ENCODE measurements at regions of chr6 and their contacts with region 1.

Region 1: DNA sequence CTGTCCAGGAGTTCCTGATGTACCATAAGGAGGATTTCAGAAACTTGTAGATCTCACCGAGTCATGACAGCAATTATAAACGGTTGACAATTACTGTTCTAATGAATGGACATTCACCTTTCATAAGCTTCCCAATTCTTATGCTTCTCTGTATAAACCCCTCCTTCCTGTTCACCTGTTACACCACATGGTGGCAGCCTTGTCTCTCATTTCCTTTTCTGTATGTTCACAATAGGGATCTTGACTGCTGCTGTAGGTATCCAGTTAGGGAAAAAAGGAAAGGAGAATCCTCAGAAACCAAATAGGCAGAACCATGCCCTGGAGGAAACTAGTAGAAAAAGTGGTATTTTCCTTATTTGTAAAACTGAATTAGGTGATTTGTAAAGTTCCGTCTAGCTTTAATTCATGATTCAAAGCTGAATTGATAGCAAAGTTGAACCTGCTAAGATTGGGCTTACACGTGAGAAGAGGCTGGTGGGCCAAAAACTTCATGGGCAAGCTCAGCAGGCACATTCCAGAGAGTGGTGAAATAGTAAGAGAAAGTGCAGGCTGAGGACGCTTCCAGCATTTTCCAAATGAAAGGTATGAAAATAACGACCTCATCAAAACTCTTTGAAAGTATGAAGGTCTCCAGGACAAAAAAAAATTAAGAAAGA is 29.0 kb upstream of the TBPL1 start:
- H3K4me3 ChIP-seq: no peak overlapping the region
- H3K27ac ChIP-seq: no peak overlapping the region
- H3K4me1 ChIP-seq: no peaks in the 10 kb centered on the region
- CTCF ChIP-seq: peak; percentile 86

Region 2: DNA sequence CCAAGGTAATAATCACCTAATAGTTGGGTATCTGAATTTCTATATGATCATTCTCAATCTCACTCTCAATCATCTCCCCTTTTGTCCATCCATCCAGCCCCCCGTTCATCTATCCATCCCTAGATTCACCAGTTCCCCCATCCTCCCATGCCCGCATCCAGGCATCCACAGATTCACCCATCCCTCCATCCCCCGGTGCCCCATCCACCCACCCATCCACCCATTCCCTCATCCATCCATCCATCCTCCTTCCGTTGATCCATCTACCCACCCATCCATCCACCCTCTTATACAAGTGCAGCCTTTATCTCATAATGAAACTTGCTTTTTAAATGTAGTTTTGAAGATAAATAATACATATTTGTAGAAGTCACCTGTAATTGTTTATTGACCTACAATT is 606.4 kb before region 1 on chr6:
- CTCF ChIA-PET with region 1: no interaction called
- POLR2A ChIA-PET with region 1: no interaction called
- H3K4me3 ChIP-seq: no peak overlapping the region
- H3K27ac ChIP-seq: no peak overlapping the region
- H3K4me1 ChIP-seq: peaks cover 9% of the 10 kb centered on the region; the same call in 1 of the 2 replicates
- CTCF ChIP-seq: no peak

Region 3: DNA sequence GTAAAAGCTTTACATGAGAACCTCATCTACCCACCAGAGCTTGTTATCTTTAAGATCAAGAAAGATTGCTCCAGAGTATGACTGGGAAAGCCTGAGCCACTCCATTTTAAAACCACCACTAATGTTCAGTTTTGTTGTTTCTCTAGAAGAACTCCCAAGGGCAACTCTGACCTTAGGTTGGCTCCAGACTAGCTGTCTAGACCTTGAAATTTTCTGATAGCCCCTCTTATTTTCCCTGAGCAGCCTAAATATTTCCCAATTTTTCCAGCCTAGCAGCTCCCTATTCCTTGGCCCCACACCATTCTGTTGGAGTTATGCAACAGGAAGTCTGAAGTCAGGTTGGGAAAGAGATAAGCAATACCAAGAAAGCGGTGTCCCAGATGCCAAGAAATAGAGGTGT is 119.8 kb before region 1 on chr6:
- CTCF ChIA-PET with region 1: no interaction called
- POLR2A ChIA-PET with region 1: no interaction called
- H3K4me3 ChIP-seq: no peak overlapping the region
- H3K27ac ChIP-seq: no peak overlapping the region
- H3K4me1 ChIP-seq: no peaks in the 10 kb centered on the region
- CTCF ChIP-seq: no peak

Region 4: GRCh38 chr6:133880896-133881295 is 43.2 kb before region 1 on chr6:
- CTCF ChIA-PET with region 1: interaction called, 11 read pairs
- POLR2A ChIA-PET with region 1: no interaction called
- H3K4me3 ChIP-seq: no peak overlapping the region
- H3K27ac ChIP-seq: no peak overlapping the region
- H3K4me1 ChIP-seq: peaks cover under 1% of the 10 kb centered on the region; the same call in 1 of the 2 replicates
- CTCF ChIP-seq: no peak

Region 5: DNA sequence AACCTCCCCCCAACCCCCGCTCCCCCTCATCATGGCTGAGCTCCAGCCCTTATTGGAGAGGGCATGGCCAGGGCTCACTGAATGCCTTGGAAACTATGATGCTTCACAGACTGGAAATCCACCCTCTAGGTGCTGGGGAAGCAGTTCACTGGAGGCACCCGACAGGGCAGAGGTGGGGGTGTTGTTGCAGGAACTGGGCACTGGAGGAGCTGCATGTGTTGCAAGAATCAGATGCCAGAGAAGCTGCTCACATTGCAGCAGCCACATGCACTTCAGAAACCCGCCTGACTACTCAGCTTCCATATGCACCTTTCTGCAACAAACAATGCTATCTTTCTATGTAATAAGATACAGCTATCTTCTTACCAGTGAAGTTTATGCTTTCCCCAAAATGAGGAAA is 21.1 kb after region 1 on chr6:
- CTCF ChIA-PET with region 1: interaction called, 55 read pairs
- POLR2A ChIA-PET with region 1: no interaction called
- H3K4me3 ChIP-seq: no peak overlapping the region
- H3K27ac ChIP-seq: no peak overlapping the region
- H3K4me1 ChIP-seq: no peaks in the 10 kb centered on the region
- CTCF ChIP-seq: 0 out of 2 replicates have a peak, but pooled peaks have one; percentile 31

Region 6: GRCh38 chr6:133973109-133973971 is 49.3 kb after region 1 on chr6:
- CTCF ChIA-PET with region 1: interaction called, 67 read pairs
- POLR2A ChIA-PET with region 1: no interaction called
- H3K4me3 ChIP-seq: no peak overlapping the region
- H3K27ac ChIP-seq: 0 out of 2 replicates have a peak overlapping the region, but pooled peaks have one; percentile 13
- H3K4me1 ChIP-seq: peaks cover 21% of the 10 kb centered on the region
- CTCF ChIP-seq: peak; percentile 47; the same call in 1 of the 2 replicates

Region 7: DNA sequence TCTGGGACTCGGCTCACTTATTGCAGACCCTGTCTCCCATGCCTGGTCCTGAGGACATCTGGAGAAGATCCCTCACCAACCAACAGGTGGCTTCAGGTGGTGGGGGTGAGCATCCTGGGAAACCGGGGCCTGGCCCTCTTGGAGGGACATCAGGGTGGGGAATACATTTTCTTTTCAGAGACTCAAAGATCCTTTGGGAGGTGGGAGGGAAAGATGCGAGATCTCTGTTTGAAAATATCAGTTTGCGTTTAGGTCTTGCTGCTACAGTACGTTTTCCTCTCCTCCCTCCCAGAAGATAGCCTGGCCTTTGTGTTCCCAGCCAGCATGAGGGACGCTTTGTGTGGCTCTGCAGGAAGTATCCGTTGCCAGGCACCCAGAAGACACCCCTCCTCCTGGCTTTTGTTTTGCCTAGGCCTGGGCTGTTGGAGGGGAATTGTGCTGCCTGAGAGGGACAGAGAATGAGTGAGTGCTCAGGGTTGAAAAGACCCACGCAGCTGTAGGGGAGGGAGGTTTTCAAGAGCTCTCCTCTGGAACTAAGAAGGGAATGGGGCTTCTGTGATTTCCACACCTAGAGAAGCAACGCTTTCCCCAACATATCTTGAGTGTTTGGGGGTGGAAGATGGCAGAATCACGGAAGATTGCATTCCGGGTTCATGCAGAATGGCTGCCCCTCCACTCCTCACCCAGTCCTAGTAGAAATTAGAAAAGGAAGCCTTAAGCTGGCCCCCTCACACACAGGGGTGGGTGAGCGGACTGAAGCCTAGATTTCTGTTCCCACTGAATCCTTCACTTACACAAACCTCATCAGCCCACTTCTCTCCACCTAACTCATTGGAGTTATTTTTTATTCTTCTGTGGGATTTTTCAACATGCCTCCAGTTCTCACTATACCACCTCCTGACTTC is 150.3 kb after region 1 on chr6:
- CTCF ChIA-PET with region 1: interaction called, 20 read pairs
- POLR2A ChIA-PET with region 1: no interaction called
- H3K4me3 ChIP-seq: no peak overlapping the region
- H3K27ac ChIP-seq: no peak overlapping the region
- H3K4me1 ChIP-seq: peaks cover under 1% of the 10 kb centered on the region; the same call in 1 of the 2 replicates
- CTCF ChIP-seq: no peak

Region 8: GRCh38 chr6:134123666-134124208 is 199.7 kb after region 1 on chr6:
- CTCF ChIA-PET with region 1: interaction called, 39 read pairs
- POLR2A ChIA-PET with region 1: no interaction called
- H3K4me3 ChIP-seq: no peak overlapping the region
- H3K27ac ChIP-seq: no peak overlapping the region
- H3K4me1 ChIP-seq: no peaks in the 10 kb centered on the region
- CTCF ChIP-seq: peak; percentile 17

Region 9: DNA sequence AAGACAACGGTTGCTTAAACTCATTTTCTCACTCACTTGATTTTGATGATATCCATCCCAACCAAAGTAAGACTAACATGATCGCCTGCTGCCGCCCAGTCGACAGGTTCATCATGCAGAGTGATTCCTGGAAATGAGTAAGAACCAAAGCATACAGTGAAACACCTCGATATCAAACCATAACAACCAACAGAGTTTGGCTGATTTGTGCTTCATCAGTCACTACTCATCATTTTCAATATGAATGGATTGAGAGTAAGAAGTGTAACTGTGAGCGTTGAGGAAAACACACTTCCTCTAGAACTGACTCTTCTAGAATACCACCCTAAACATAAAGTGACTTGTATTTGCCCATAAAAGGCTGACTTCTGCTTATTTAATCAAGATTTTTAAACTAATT is 1055.1 kb after region 1 on chr6:
- CTCF ChIA-PET with region 1: no interaction called
- POLR2A ChIA-PET with region 1: no interaction called
- H3K4me3 ChIP-seq: no peak overlapping the region
- H3K27ac ChIP-seq: no peak overlapping the region
- H3K4me1 ChIP-seq: no peaks in the 10 kb centered on the region
- CTCF ChIP-seq: no peak

Measured in HEK293 (cell line).